ENCODE measurements at regions of chr1 and their contacts with region 1.

Region 1: DNA sequence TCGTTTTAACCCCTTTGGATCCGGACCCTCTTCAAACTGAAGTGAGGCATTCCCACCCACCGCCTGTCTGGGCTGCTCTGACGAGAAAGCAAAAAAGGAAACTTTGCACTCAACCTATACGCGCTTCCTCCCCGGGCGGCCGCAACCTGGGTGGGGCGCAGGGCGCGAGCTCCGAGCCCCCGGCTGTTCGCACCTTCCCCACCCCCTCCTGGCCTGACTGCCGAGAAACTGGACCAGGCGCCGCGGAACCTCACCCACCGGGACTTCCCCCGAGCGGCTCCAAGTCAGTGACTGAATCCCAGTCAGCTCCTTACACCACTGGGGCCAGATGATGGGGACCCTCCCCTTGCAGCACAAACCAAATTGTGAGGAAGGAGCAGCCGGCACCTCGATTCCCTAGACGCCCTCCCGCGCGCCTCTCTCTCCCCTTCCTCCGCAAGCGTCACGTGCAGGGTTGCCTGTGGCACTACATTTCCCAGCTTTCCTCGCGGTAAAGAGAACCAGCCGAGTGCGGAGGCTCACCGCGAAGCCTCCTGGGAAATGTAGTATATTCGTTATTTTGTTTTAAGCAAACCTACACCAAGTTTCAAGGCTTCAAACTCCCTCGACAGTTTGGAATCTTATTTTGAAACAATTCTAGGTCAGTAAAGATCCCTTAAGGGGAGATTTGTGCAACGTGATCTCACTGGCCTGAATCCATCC is at the start of gene RAB29:
- DNase-seq: peak; percentile 80 to 92 (median 89)
- H3K4me3 ChIP-seq: peak within 1 kb of the TSS; percentile 84
- H3K4me3 Mint-ChIP-seq: peak within 1 kb of the TSS; percentile 89 to 99 (median 97)
- H3K27ac ChIP-seq: peak within 1 kb of the TSS; percentile 90
- H3K27ac Mint-ChIP-seq: peak within 1 kb of the TSS; percentile 95 to 100 (median 99)
- H3K4me1 ChIP-seq: peaks cover 41% of the 10 kb centered on the region
- H3K4me1 Mint-ChIP-seq: peaks cover 57 to 64% (median 62%) of the 10 kb centered on the region in 3 donors
- H3K27me3 ChIP-seq: no peaks in the 10 kb centered on the region
- H3K27me3 Mint-ChIP-seq: peaks cover 0 to 2% of the 10 kb centered on the region in 2 donors
- total RNA-seq, gene RAB29: 37.1 to 39.7 TPM

Region 2: GRCh38 chr1:205750138-205751035 is 24.8 kb before region 1 on chr1 and contains the start of gene NUCKS1:
- CTCF ChIA-PET with region 1: interaction called, 4 read pairs
- POLR2A ChIA-PET with region 1: interaction called, 74 read pairs
- DNase-seq: peak; percentile 93 to 99 (median 97)
- H3K4me3 ChIP-seq: peak within 1 kb of the TSS; percentile 88
- H3K4me3 Mint-ChIP-seq: peak within 1 kb of the TSS; percentile 91 to 97 (median 96)
- H3K27ac ChIP-seq: peak within 1 kb of the TSS; percentile 82
- H3K27ac Mint-ChIP-seq: peak within 1 kb of the TSS; percentile 95 to 99 (median 98)
- H3K4me1 ChIP-seq: peaks cover 24% of the 10 kb centered on the region
- H3K4me1 Mint-ChIP-seq: peaks cover 39 to 49% (median 48%) of the 10 kb centered on the region in 3 donors
- H3K27me3 ChIP-seq: no peaks in the 10 kb centered on the region
- H3K27me3 Mint-ChIP-seq: peaks cover 0 to 3% of the 10 kb centered on the region in 2 donors
- total RNA-seq, gene NUCKS1: 162 to 202 TPM